Heart left ventricle (tissue), 16 donors: ENCODE measurements at regions of chr5 and their contacts with region 1.

Region 1: DNA sequence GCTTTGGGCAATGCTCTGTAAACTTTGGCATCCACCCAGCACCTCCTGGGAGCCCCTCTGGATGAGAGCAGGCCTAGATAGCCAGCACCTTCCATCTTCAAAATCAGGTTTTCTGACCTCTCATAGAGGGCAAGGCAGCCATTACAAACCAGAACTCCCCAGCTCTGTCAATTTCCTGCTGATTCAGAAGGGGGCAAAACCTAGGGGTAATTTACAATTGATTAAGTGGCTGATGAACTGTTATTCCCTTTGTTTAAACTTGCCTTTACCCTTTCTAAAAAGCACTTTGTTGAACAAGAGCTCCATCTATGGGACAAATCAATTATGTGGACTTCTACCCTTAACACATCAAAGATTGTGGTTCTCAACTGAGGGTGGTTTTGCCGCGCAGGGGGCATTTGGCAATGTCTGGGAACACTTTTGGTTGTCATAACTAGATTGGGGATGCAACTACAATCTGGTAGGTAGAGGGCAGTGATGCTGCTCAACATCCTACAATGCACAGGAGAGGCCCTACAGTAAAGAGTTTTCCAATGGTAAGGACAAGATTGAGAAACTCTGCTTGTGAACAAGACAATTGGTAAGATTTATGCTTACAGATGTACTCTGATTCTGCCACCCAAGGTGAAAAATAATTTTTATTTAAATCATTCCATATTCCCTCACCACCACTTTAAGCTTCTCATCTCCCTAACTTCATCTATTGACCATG is 184.1 kb downstream of the MARCHF11 start:
- DNase-seq: no peak
- ATAC-seq: peak in 2 of 4 donors; percentile 55 to 69
- H3K4me3 ChIP-seq: no peak overlapping the region
- H3K27ac ChIP-seq: no peak overlapping the region
- H3K4me1 ChIP-seq: peaks cover 0 to 10% (median 0%) of the 10 kb centered on the region in 12 donors
- H3K27me3 ChIP-seq: no peaks in the 10 kb centered on the region
- CTCF ChIP-seq: peak; percentile 31 to 74 (median 60)
- POLR2A ChIP-seq: no peak

Region 2: DNA sequence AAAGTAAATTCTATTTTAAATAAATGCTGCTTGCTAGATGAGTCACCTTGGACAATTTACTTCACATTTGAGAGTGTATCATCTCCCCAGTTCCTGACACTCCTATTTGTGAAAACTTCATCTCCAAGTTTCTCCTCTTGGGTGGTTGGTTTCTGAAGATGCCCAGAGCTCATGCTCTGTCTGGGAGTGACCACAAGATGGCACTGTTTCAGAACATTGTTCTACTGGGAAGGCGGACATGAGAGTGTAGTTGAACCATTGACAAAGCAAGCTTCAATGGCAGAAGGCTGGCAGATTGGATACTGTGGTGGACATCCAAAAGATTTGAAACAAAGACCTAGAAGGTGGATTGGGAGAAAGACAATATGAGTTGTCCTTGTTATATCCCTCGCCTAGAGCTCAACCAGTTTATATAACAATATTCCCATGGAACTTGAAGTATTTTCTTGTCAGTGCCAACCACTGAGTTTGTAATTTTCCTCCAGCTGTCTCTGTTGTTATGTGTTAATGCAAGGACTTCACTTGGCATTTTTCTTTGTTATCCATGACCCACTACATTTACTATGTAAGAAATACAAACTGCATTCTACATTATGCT is 889.6 kb before region 1 on chr5:
- intact Hi-C with region 1: loop called in 7 of 10 experiments (anchors 2 to 10 kb)
- DNase-seq: peak in 3 of 5 donors; percentile 18 to 28 (median 21)
- ATAC-seq: peak in 3 of 4 donors; percentile 66 to 77 (median 69)
- H3K4me3 ChIP-seq: no peak overlapping the region
- H3K27ac ChIP-seq: no peak overlapping the region
- H3K4me1 ChIP-seq: peaks cover 0 to 3% (median 0%) of the 10 kb centered on the region in 12 donors
- H3K27me3 ChIP-seq: no peaks in the 10 kb centered on the region
- CTCF ChIP-seq: peak; percentile 50 to 82 (median 68)
- POLR2A ChIP-seq: no peak

Region 3: DNA sequence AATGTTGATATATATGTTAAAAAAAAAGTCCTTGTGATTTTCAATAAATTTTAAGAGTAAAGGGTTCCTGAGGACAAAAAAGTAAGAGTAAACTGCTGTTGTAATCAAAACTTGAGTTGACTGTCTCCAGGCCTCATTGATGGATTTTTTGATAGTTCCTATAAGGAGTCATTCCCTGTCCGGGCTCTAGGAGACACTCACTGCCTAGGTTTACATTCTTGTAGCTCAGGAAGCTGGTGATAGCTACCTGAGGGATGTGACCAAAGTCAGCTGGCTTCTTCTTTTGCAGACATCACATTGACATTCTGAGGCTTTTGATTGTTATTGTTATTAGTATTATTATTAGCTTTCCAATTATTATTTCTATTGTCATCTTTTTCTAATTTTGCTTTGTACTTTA is 612.0 kb before region 1 on chr5:
- intact Hi-C with region 1: loop called in 1 of 10 experiments (anchors 5 kb)
- DNase-seq: no peak
- ATAC-seq: no peak
- H3K4me3 ChIP-seq: no peak overlapping the region
- H3K27ac ChIP-seq: no peak overlapping the region
- H3K4me1 ChIP-seq: no peaks in the 10 kb centered on the region
- H3K27me3 ChIP-seq: no peaks in the 10 kb centered on the region
- CTCF ChIP-seq: peak in 9 of 12 donors; percentile 13 to 54 (median 39)
- POLR2A ChIP-seq: no peak

Region 4: GRCh38 chr5:15499528-15500324 is 495.8 kb before region 1 on chr5 and contains the start of gene FBXL7:
- intact Hi-C with region 1: loop called in 2 of 10 experiments (anchors 10 kb)
- DNase-seq: peak; percentile 88 to 92 (median 89)
- ATAC-seq: peak; percentile 90 to 93 (median 91)
- H3K4me3 ChIP-seq: peak within 1 kb of the TSS; percentile 69 to 93 (median 81)
- H3K27ac ChIP-seq: peak within 1 kb of the TSS; percentile 83 to 96 (median 90)
- H3K4me1 ChIP-seq: peaks cover 3 to 38% (median 18%) of the 10 kb centered on the region in 12 donors
- H3K27me3 ChIP-seq: peaks cover 0 to 14% (median 0%) of the 10 kb centered on the region in 9 donors
- CTCF ChIP-seq: peak in 9 of 12 donors; percentile 9 to 55 (median 37)
- POLR2A ChIP-seq: peak in 1 of 2 donors; percentile 57
- total RNA-seq, gene FBXL7: 17.6 to 27.6 (median 24.5) TPM

Region 5: GRCh38 chr5:15821506-15821905 is 174.0 kb before region 1 on chr5:
- intact Hi-C with region 1: loop called in 2 of 10 experiments (anchors 10 kb)
- DNase-seq: no peak
- ATAC-seq: no peak
- H3K4me3 ChIP-seq: no peak overlapping the region
- H3K27ac ChIP-seq: no peak overlapping the region
- H3K4me1 ChIP-seq: peaks cover 0 to 12% (median 4%) of the 10 kb centered on the region in 12 donors
- H3K27me3 ChIP-seq: no peaks in the 10 kb centered on the region
- CTCF ChIP-seq: no peak
- POLR2A ChIP-seq: no peak

Region 6: DNA sequence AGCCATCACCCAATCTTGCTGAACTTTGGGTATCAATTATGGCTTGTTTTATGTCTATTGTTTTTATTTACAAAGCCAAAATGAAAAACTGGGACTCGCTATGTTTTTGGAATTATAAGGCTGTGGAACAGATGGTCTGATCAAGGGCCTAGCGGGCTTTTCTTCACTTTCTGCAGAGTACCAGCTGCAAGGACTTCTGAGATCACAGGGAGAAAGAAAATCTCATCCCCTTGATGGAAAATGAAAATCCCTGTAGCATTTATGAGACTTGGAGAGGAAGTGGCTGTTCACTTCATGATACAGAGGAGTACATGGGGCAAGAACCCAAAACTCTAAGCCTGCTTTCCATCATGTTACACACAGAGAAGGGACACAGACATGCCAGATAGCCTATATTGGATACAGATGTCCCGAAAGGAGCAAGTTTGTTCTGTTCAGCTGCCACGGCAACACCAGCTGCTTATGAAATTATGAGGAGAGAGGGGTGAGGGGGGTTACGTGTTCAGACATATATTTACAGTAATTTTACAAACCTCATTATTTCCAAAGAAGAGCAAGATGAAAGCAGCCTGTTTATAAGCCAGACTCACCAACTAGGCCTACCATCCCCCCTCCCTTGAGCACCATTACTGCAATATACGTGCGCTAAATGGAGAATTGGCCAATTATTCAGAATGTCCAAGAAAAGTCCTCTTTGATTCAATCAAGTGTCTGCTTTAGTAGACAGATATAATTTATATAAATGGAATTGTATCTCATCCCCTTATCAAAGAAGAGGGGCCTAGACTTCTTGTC is 35.9 kb before region 1 on chr5:
- intact Hi-C with region 1: no loop called
- DNase-seq: no peak
- ATAC-seq: peak; percentile 15 to 76 (median 51)
- H3K4me3 ChIP-seq: no peak overlapping the region
- H3K27ac ChIP-seq: no peak overlapping the region
- H3K4me1 ChIP-seq: no peaks in the 10 kb centered on the region
- H3K27me3 ChIP-seq: no peaks in the 10 kb centered on the region
- CTCF ChIP-seq: no peak
- POLR2A ChIP-seq: no peak